ENCODE measurements at regions of chr22 and their contacts with region 1.

Region 1: GRCh38 chr22:17171313-17172171 is 12.5 kb upstream of the HDHD5 start:
- DNase-seq: peak; percentile 63 to 80 (median 67)
- H3K4me3 ChIP-seq: peak overlapping the region; percentile 51
- H3K4me3 Mint-ChIP-seq: peak overlapping the region; percentile 84 to 92 (median 86)
- H3K27ac ChIP-seq: peak overlapping the region; percentile 31
- H3K27ac Mint-ChIP-seq: peak overlapping the region in 7 of 8 donors; percentile 24 to 95 (median 72)
- H3K4me1 ChIP-seq: peaks cover 5% of the 10 kb centered on the region
- H3K4me1 Mint-ChIP-seq: peaks cover 5 to 11% (median 7%) of the 10 kb centered on the region in 3 donors
- H3K27me3 ChIP-seq: no peaks in the 10 kb centered on the region
- H3K27me3 Mint-ChIP-seq: peaks cover 0 to 2% of the 10 kb centered on the region in 2 donors

Region 2: DNA sequence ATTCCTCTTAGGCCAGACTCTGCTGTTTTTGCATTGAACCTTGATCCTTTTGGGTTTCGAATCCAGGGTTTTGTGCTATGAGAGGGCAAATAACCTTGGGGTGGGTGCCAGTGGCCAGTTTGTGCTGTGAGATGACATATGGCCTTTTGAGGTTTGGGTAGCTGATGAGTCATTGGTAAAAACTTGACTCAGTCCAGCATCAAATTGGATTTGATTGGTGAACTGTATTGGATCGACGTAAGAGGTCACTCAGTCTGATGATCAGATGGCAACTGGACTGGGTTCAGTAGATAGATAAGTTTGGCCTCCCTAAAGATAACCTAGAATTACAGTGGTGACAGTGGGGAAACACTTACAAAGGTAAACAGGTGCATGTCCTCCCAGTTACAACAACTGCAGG is 305.4 kb before region 1 on chr22:
- CTCF ChIA-PET with region 1: no interaction called
- POLR2A ChIA-PET with region 1: no interaction called
- DNase-seq: no peak
- H3K4me3 ChIP-seq: no peak overlapping the region
- H3K4me3 Mint-ChIP-seq: no peak overlapping the region
- H3K27ac ChIP-seq: no peak overlapping the region
- H3K27ac Mint-ChIP-seq: no peak overlapping the region
- H3K4me1 ChIP-seq: no peaks in the 10 kb centered on the region
- H3K4me1 Mint-ChIP-seq: no peaks in the 10 kb centered on the region
- H3K27me3 ChIP-seq: no peaks in the 10 kb centered on the region
- H3K27me3 Mint-ChIP-seq: peaks cover 0 to 5% of the 10 kb centered on the region in 2 donors

Region 3: DNA sequence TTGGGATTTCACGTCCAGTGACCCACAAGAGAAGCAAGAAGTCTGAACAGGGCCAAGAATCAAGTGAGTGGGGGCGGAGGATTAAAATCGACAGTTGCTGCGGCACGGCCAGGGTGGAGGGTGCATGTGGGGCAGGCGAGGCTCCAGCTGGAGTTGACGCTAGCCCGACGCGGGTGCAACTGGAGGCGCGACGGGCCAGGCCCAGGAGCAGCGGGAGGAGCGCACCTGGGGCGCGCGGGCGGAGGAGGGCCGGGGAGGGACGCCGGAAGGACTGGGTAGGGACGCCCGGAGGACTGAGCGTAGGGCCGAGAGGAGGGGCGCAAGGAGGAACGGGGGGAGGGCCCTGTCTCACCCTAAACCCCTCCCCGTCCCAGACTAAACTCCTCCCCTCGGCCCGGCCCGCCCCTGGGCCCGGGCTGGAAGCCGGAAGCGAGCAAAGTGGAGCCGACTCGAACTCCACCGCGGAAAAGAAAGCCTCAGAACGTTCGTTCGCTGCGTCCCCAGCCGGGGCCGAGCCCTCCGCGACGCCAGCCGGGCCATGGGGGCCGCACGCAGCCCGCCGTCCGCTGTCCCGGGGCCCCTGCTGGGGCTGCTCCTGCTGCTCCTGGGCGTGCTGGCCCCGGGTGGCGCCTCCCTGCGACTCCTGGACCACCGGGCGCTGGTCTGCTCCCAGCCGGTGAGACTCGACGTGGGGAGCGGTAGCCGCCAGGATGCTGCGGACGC is 86.8 kb before region 1 on chr22 and contains the start of gene IL17RA:
- CTCF ChIA-PET with region 1: interaction called, 26 read pairs
- POLR2A ChIA-PET with region 1: interaction called, 5 read pairs
- DNase-seq: peak; percentile 87 to 96 (median 91)
- H3K4me3 ChIP-seq: peak within 1 kb of the TSS; percentile 35
- H3K4me3 Mint-ChIP-seq: peak within 1 kb of the TSS; percentile 85 to 97 (median 92)
- H3K27ac ChIP-seq: peak within 1 kb of the TSS; percentile 68
- H3K27ac Mint-ChIP-seq: peak within 1 kb of the TSS; percentile 82 to 98 (median 91)
- H3K4me1 ChIP-seq: peaks cover 34% of the 10 kb centered on the region
- H3K4me1 Mint-ChIP-seq: peaks cover 43 to 51% (median 47%) of the 10 kb centered on the region in 3 donors
- H3K27me3 ChIP-seq: no peaks in the 10 kb centered on the region
- H3K27me3 Mint-ChIP-seq: no peaks in the 10 kb centered on the region
- total RNA-seq, gene IL17RA: 21.7 to 22.0 TPM

Region 4: DNA sequence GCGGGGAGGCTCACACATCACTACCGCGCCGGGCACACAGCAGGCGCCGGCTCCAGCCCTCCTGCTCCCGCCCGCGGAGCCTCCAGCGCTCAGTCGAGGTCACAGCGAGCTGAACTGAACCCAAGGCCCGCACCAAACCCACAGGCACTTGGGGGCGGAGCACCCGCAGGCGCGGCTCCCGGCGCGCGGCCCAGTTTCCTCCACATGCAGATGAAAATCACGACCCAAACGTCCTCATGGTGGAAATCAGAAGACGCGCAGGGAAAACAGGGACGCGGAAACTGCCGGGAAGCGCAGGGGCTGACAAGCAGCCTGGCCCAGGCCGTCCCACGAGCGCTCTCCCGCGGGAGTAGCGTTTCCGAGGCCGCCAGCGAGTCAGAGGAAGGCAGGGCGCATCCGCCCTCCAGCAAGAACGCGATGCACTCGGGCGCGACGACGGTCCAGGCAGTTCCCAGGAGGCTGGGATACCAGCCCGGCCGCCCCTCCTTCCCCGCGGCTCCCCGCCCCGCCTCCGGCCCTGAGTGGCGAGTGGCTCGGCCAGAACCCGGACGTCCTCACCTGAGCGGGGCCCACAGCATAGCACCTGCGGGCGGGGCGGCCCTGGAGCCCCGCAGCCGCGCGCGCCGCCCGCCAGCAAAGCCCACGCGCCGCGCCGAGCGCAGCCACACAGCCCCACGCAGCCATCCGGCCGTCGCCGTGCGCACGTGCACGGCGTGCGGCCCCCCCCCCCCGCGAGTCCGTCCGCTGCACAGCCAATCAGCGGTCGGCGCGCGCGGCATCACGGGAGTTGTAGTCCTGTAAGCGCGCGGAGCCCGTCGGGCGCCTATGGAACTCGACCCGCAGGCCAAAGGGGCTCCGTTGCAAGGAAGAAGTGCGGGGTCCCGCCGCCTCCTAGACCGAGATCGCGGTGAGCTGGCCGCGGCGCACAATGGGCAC is 12.7 kb before region 1 on chr22 and contains the start of gene HDHD5:
- CTCF ChIA-PET with region 1: interaction called, 76 read pairs
- POLR2A ChIA-PET with region 1: interaction called, 4 read pairs
- DNase-seq: peak; percentile 80 to 91 (median 86)
- H3K4me3 ChIP-seq: peak within 1 kb of the TSS; percentile 80
- H3K4me3 Mint-ChIP-seq: peak within 1 kb of the TSS; percentile 81 to 92 (median 85)
- H3K27ac ChIP-seq: peak within 1 kb of the TSS; percentile 61
- H3K27ac Mint-ChIP-seq: peak within 1 kb of the TSS; percentile 46 to 85 (median 72)
- H3K4me1 ChIP-seq: peaks cover 34% of the 10 kb centered on the region
- H3K4me1 Mint-ChIP-seq: peaks cover 25 to 42% (median 39%) of the 10 kb centered on the region in 3 donors
- H3K27me3 ChIP-seq: no peaks in the 10 kb centered on the region
- H3K27me3 Mint-ChIP-seq: no peaks in the 10 kb centered on the region
- total RNA-seq, gene HDHD5: 38.6 to 40.0 TPM

Region 5: GRCh38 chr22:17201285-17201945 is 29.9 kb after region 1 on chr22:
- CTCF ChIA-PET with region 1: interaction called, 11 read pairs
- POLR2A ChIA-PET with region 1: no interaction called
- DNase-seq: no peak
- H3K4me3 ChIP-seq: no peak overlapping the region
- H3K4me3 Mint-ChIP-seq: no peak overlapping the region
- H3K27ac ChIP-seq: no peak overlapping the region
- H3K27ac Mint-ChIP-seq: peak overlapping the region in 4 of 8 donors; percentile 49 to 85 (median 74)
- H3K4me1 ChIP-seq: no peaks in the 10 kb centered on the region
- H3K4me1 Mint-ChIP-seq: peaks cover 0 to 8% (median 4%) of the 10 kb centered on the region in 3 donors
- H3K27me3 ChIP-seq: no peaks in the 10 kb centered on the region
- H3K27me3 Mint-ChIP-seq: no peaks in the 10 kb centered on the region

Region 6: DNA sequence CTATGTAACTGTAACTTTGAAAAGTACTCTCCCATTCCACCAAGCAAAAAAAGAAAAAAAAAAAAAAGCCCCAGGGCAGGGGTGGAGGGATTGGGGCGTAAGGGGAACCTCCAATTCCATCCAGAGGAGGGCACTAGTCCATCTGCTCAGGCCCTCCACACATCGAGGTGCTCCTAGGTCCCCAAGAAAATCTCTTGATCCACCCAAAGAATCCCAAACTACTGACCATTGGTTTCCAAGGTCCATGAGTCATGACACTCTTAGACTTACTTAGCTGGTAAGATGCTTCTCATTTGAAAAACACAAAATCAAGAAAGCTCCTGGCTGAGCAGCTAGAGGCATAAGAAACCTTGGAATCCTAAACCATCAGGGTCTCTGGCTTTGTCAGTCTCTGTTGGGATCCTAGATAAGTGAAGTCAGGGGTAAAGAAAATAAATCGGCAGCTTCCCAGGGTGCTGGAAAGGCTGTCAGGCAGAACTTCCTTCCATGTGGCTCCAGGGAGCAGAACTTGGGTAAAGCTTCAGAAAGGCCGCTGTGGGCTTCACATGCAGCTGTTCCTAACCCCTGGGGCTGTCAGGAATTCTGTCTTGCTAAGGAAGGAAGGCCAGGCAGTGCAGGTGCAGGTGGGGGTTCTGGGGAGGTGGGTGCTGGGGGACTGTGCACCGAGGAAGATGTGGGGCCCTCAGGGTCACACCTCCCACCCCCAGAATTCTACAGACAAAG is 97.1 kb after region 1 on chr22:
- CTCF ChIA-PET with region 1: no interaction called
- POLR2A ChIA-PET with region 1: no interaction called
- DNase-seq: no peak
- H3K4me3 ChIP-seq: no peak overlapping the region
- H3K4me3 Mint-ChIP-seq: no peak overlapping the region
- H3K27ac ChIP-seq: no peak overlapping the region
- H3K27ac Mint-ChIP-seq: peak overlapping the region in 3 of 8 donors; percentile 29 to 64 (median 43)
- H3K4me1 ChIP-seq: peaks cover 12% of the 10 kb centered on the region
- H3K4me1 Mint-ChIP-seq: peaks cover 4 to 24% (median 10%) of the 10 kb centered on the region in 3 donors
- H3K27me3 ChIP-seq: no peaks in the 10 kb centered on the region
- H3K27me3 Mint-ChIP-seq: no peaks in the 10 kb centered on the region

Region 7: DNA sequence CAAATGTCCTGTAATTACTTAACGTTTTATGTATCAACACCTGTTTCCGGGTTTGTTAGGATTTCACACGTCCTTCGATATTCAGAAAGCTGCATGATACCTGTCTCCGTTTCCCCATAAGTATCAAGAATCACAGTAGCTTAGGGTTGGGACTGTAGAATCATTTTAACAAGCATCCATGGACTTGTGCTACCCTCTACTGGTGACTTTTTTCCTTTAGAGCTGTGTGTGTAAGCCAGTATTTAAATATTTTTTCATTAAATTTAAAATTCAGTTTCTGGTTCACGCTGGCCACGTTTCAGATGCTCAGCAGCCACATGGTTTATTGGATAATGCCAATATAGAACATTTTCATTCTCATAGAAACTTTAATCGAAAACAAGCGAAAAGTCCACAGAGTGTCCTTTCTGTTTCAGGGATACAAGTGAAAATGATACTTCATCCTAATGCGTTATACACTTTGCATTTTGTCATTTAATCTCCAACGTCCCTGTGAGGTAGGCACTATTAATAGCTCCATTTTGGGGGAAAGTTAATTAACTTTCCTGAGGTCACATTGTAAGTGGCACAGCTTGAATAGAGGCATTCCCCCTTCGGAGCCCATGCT is 330.2 kb after region 1 on chr22:
- CTCF ChIA-PET with region 1: interaction called, 80 read pairs
- POLR2A ChIA-PET with region 1: interaction called, 4 read pairs
- DNase-seq: peak in 2 of 5 donors; percentile 47 to 61
- H3K4me3 ChIP-seq: no peak overlapping the region
- H3K4me3 Mint-ChIP-seq: no peak overlapping the region
- H3K27ac ChIP-seq: no peak overlapping the region
- H3K27ac Mint-ChIP-seq: no peak overlapping the region
- H3K4me1 ChIP-seq: no peaks in the 10 kb centered on the region
- H3K4me1 Mint-ChIP-seq: no peaks in the 10 kb centered on the region
- H3K27me3 ChIP-seq: no peaks in the 10 kb centered on the region
- H3K27me3 Mint-ChIP-seq: peaks cover 4 to 12% of the 10 kb centered on the region in 2 donors